CD14-positive monocyte (primary cell): ENCODE measurements at regions of chr19 and their contacts with region 1.

Region 1: DNA sequence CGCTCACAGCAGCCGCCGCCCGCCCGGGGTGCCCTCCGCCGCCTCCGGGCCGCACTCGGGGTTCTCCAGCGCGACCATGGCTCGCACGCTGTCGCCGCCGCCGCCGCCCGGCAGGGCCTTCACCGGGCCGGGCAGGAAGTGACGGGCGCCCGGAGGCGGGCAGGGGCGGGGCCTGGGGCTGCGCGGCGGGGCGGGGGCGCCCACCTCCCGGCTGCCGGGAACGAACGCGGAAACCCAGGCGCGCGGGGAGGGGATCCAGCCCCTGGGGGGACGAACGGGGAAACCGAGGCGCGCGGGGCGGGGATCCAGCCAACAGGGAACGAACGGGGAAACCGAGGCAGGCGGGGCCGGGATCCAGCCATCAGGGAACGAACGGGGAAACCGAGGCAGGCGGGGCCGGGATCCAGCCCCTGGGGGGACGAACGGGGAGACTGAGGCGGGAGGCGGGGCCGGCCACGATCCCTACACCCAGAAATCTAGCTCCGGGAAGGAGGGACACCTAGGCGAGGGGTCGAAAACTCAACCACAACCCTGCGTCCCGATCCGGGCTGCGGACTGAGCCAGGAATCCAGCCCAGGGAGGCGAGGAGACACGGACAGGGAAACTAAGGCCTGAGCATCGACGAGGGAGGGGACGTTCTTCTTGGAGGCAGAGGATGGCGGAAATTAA is at the start of gene R3HDM4:
- DNase-seq: peak; percentile 49 to 71 (median 66)
- H3K4me3 ChIP-seq: peak within 1 kb of the TSS; percentile 86 to 93 (median 89)
- H3K4me3 Mint-ChIP-seq: peak within 1 kb of the TSS; percentile 83
- H3K27ac ChIP-seq: peak within 1 kb of the TSS; percentile 84 to 90
- H3K27ac Mint-ChIP-seq: peak within 1 kb of the TSS; percentile 75 to 94 (median 86)
- H3K4me1 ChIP-seq: peaks cover 48 to 70% of the 10 kb centered on the region in 2 donors
- H3K4me1 Mint-ChIP-seq: peaks cover 37% of the 10 kb centered on the region
- H3K27me3 ChIP-seq: peaks cover 14 to 18% of the 10 kb centered on the region in 2 donors
- H3K27me3 Mint-ChIP-seq: peaks cover 17 to 23% (median 19%) of the 10 kb centered on the region in 3 donors
- CTCF ChIP-seq: no peak
- polyA plus RNA-seq, gene R3HDM4: 70.8 to 99.9 (median 78.7) TPM

Region 2: GRCh38 chr19:892243-893050 is 20.8 kb before region 1 on chr19:
- intact Hi-C with region 1: loop called in 1 of 2 experiments (anchors 2 kb)
- DNase-seq: no peak
- H3K4me3 ChIP-seq: peak overlapping the region; percentile 73 to 85 (median 74)
- H3K4me3 Mint-ChIP-seq: peak overlapping the region; percentile 80 to 83
- H3K27ac ChIP-seq: peak overlapping the region; percentile 16 to 95
- H3K27ac Mint-ChIP-seq: peak overlapping the region; percentile 49 to 96 (median 81)
- H3K4me1 ChIP-seq: peaks cover 15 to 19% of the 10 kb centered on the region in 2 donors
- H3K4me1 Mint-ChIP-seq: peaks cover 24% of the 10 kb centered on the region
- H3K27me3 ChIP-seq: no peaks in the 10 kb centered on the region
- H3K27me3 Mint-ChIP-seq: peaks cover 0 to 3% (median 0%) of the 10 kb centered on the region in 3 donors
- CTCF ChIP-seq: no peak